Activated B cell treated with CpG ODN at 0.5 μM for 24 hours (primary cell): ENCODE measurements at regions of chr12 and their contacts with region 1.

Region 1: DNA sequence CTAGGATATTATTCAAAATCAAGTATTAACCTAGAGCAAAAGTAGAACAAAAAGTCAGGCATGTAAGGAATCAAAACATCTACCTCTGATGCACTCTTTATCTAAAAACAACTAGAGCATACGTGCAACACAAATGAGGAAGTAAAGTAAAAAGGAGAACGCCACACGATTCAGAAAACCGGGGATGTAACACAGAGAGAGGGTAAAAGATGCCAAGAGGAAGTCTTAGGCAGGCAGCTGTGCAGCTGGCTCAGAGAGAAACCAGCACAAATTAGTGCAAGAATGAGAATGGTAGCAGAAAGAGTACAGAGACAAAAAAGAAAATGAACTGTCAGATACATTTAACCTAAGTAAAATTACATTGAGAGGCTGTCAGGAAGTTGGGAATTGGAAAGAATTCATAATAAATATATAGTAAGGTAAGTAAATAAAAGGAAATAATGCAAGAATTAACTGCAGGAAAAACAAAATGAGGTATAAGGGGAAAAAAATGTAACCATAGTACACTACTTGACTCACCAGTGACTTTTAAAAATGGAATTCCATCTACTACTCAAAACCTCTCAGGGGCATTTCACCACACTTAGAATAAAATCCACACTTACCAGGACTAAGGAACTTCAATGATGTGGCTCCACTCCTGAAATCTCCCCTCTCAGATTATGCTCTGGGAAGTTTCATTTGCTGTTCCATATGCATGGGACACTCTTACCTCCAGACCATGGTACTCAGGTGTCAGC is 17.1 kb downstream of the BCAT1 start:
- DNase-seq: no peak
- ATAC-seq: peak; percentile 94
- H3K4me3 Mint-ChIP-seq: peak overlapping the region; percentile 40
- H3K27ac Mint-ChIP-seq: peak overlapping the region; percentile 72
- H3K4me1 Mint-ChIP-seq: peaks cover 26% of the 10 kb centered on the region
- H3K27me3 Mint-ChIP-seq: no peaks in the 10 kb centered on the region
- CTCF ChIP-seq: no peak

Region 2: DNA sequence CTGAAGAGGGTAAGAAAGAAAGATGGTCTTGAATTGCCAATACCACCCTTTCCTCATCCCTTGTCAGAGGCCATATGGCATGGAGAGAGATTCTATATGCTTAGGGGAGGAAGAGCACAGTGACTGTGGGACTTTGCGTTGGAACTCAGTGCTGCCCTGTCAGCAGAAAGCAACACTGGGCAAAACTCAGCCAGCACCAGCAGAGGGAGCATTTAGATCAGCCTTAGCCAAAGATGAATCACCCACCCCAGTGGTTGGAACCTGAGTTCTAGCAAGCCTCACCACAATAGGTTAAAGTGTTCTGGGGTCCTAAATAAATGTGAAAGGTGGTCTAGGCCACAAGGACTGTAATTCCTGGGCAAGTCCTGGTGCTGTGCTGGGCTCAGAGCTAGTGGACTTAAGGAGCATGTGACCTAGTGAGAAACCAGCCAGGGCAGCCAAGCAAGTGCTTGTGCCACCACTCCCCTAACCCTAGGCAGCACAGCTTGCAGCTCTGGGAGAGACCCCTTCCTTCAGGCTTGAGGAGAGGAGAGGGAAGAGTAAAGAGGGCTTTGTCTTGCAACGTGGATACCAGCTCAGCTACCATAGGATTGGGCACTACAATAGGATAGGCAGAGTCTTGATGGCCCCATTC is 28.5 kb after region 1 on chr12:
- CTCF ChIA-PET with region 1: no interaction called
- POLR2A ChIA-PET with region 1: interaction called, 10 read pairs
- intact Hi-C with region 1: no loop called
- DNase-seq: no peak
- ATAC-seq: peak; percentile 79
- H3K4me3 Mint-ChIP-seq: no peak overlapping the region
- H3K27ac Mint-ChIP-seq: no peak overlapping the region
- H3K4me1 Mint-ChIP-seq: peaks cover 14% of the 10 kb centered on the region
- H3K27me3 Mint-ChIP-seq: no peaks in the 10 kb centered on the region
- CTCF ChIP-seq: no peak